A673 (cell line): ENCODE measurements at regions of chr21 and their contacts with region 1.

Region 1: GRCh38 chr21:21232320-21232719 is 234.1 kb downstream of the NCAM2 start:
- DNase-seq: peak; percentile 68
- H3K4me3 ChIP-seq: no peak overlapping the region
- H3K27ac ChIP-seq: peak overlapping the region; percentile 53
- H3K4me1 ChIP-seq: peaks cover 48% of the 10 kb centered on the region
- H3K27me3 ChIP-seq: no peaks in the 10 kb centered on the region
- CTCF ChIP-seq: peak; percentile 80

Region 2: GRCh38 chr21:20999659-21000058 is 232.7 kb before region 1 on chr21:
- CTCF ChIA-PET with region 1: no interaction called
- POLR2A ChIA-PET with region 1: interaction called, 5 read pairs
- intact Hi-C with region 1: loop called (anchors 2 kb)
- DNase-seq: peak; percentile 82
- H3K4me3 ChIP-seq: peak overlapping the region; percentile 84
- H3K27ac ChIP-seq: no peak overlapping the region
- H3K4me1 ChIP-seq: peaks cover 18% of the 10 kb centered on the region
- H3K27me3 ChIP-seq: no peaks in the 10 kb centered on the region
- CTCF ChIP-seq: peak; percentile 89

Region 3: DNA sequence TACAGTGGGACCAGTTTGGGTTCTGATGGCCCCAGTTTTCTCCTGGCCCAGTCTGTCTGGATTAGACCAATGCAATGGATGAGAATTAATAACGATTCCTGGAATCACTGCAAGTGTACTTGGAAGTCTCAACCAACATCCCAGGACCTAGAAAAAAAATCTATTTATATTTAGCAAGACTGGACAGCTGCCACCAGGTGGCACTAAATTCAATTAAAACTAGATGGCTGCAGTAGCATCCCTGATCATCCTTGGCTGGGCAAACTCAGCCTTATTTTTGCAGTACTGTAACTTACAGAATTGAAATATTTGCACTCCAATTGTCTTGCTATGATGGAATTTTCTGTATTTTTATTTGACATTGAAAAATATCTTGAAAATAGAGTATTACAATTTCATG is 68.4 kb before region 1 on chr21:
- CTCF ChIA-PET with region 1: no interaction called
- POLR2A ChIA-PET with region 1: no interaction called
- intact Hi-C with region 1: loop called (anchors 5 kb)
- DNase-seq: peak; percentile 81
- H3K4me3 ChIP-seq: no peak overlapping the region
- H3K27ac ChIP-seq: no peak overlapping the region
- H3K4me1 ChIP-seq: peaks cover 11% of the 10 kb centered on the region
- H3K27me3 ChIP-seq: no peaks in the 10 kb centered on the region
- CTCF ChIP-seq: peak; percentile 72

Region 4: GRCh38 chr21:21373969-21374368 is 141.6 kb after region 1 on chr21:
- CTCF ChIA-PET with region 1: no interaction called
- POLR2A ChIA-PET with region 1: no interaction called
- intact Hi-C with region 1: loop called (anchors 5 kb)
- DNase-seq: peak; percentile 13
- H3K4me3 ChIP-seq: no peak overlapping the region
- H3K27ac ChIP-seq: no peak overlapping the region
- H3K4me1 ChIP-seq: no peaks in the 10 kb centered on the region
- H3K27me3 ChIP-seq: no peaks in the 10 kb centered on the region
- CTCF ChIP-seq: peak; percentile 57

Region 5: GRCh38 chr21:21688875-21689274 is 456.6 kb after region 1 on chr21:
- CTCF ChIA-PET with region 1: no interaction called
- POLR2A ChIA-PET with region 1: no interaction called
- intact Hi-C with region 1: loop called (anchors 2 kb)
- DNase-seq: peak; percentile 72
- H3K4me3 ChIP-seq: no peak overlapping the region
- H3K27ac ChIP-seq: no peak overlapping the region
- H3K4me1 ChIP-seq: peaks cover 13% of the 10 kb centered on the region
- H3K27me3 ChIP-seq: no peaks in the 10 kb centered on the region
- CTCF ChIP-seq: peak; percentile 82

Region 6: DNA sequence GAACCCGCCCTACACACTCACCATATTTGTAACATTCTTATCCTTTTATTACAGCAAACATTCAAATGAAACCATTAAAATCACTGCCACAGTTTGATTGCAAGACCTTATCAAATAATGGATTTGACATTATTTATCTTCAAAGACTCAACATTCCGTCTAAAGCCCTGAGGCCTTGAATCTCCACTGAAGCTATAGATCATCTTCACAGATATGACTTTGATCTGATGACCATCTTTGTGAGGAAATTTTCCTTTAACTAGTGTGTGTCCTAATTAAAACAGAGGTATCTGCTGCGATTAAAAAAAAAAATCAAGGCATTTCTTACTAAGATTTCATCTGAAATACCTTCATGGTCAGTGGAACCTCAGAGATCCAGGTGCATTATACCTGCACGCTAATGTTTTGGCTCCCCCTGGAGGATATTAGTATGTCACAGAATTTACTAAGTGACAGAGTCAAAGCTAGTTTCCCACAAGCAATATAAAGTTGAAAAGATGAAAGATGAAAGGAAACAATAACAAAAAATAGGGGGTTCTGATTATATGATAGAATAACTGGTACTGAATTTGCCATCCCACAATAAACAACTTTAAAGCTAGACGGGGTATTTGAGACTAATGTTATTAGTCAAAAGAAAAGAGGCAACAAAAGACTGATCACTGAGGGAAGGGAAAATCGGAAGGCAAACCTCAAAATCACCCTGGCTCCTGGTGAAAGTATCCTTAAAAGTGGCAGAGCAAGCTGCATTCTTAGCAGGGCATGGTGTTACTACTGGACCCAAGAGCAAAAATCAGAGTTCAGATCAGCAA is 689.3 kb after region 1 on chr21:
- CTCF ChIA-PET with region 1: no interaction called
- POLR2A ChIA-PET with region 1: no interaction called
- intact Hi-C with region 1: loop called (anchors 5 kb)
- DNase-seq: peak; percentile 34
- H3K4me3 ChIP-seq: no peak overlapping the region
- H3K27ac ChIP-seq: no peak overlapping the region
- H3K4me1 ChIP-seq: peaks cover 6% of the 10 kb centered on the region
- H3K27me3 ChIP-seq: no peaks in the 10 kb centered on the region
- CTCF ChIP-seq: peak; percentile 77

Region 7: DNA sequence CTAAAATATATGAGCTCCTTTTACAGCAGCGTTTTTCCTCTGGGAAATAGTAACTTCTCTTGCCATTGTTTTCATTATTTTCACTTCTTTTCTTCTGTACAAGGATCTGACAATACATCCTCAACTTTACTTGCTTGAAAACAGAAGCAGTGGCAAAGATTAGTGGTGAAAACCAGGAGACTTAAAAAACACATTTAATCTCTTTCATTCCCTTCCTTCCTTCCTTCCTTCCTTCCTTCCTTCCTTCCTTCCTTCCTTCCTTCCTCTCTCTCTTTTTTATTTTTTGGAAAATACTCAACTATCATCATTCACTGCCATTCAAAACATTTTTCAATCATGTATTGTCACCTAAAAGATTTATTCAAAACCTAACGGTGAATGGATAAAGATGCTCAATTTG is 1177.3 kb after region 1 on chr21:
- CTCF ChIA-PET with region 1: no interaction called
- POLR2A ChIA-PET with region 1: no interaction called
- intact Hi-C with region 1: loop called (anchors 5 kb)
- DNase-seq: peak; percentile 95
- H3K4me3 ChIP-seq: no peak overlapping the region
- H3K27ac ChIP-seq: peak overlapping the region; percentile 97
- H3K4me1 ChIP-seq: peaks cover 33% of the 10 kb centered on the region
- H3K27me3 ChIP-seq: no peaks in the 10 kb centered on the region
- CTCF ChIP-seq: no peak